B cell (primary cell): ENCODE measurements at regions of chr11 and their contacts with region 1.

Region 1: DNA sequence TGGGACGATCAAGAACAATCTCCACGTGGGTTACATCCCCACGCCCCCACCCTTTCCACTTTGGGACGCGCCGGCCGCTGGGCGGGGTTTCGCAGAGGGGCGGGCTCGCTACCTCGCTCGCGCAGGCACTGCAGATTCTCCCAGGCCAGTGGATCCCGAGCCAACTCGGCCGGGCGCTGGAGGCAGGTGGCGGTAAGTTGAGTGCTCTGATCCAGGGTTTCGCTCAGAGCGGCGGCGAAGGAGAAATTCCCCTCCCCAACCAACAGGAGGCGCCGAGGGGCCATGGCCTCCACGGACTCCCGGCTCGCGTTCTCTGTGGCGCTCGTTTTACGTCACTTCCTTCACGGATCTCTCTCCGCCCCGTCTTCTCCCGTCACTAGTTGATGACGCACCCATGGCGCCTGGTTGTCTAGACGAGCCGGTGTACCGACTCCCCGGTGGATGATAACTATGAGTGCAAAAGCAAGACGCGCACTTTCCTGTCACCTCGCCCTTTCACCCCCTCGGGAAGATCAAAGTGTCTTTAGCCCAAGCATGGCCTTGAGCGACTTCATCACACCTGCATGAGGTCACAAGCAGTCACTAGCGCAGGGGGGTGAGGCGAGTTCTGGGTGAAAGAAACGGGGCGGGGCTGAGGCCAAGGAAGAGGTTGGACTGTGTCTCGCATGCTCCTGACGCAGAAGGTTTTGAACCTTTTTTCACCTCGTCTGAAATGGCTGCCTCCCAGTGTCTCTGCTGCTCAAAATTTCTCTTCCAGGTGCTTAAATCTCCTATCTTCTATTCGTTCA is at the starts of genes CFAP68 and FDXACB1:
- DNase-seq: peak; percentile 99
- ATAC-seq: peak; percentile 90
- H3K4me3 ChIP-seq: peak within 1 kb of the TSS; percentile 58 to 93 (median 75)
- H3K4me3 Mint-ChIP-seq: peak within 1 kb of the TSS; percentile 94
- H3K27ac ChIP-seq: peak within 1 kb of the TSS; percentile 88 to 97
- H3K27ac Mint-ChIP-seq: peak within 1 kb of the TSS; percentile 98
- H3K4me1 ChIP-seq: peaks cover 12 to 14% of the 10 kb centered on the region in 2 donors
- H3K4me1 Mint-ChIP-seq: peaks cover 16% of the 10 kb centered on the region
- H3K27me3 ChIP-seq: no peaks in the 10 kb centered on the region
- H3K27me3 Mint-ChIP-seq: no peaks in the 10 kb centered on the region
- CTCF ChIP-seq: peak; percentile 99
- total RNA-seq, gene CFAP68: 7.8 and 8.2 TPM in 2 replicates
- total RNA-seq, gene FDXACB1: 3.1 and 4.2 TPM in 2 replicates

Region 2: DNA sequence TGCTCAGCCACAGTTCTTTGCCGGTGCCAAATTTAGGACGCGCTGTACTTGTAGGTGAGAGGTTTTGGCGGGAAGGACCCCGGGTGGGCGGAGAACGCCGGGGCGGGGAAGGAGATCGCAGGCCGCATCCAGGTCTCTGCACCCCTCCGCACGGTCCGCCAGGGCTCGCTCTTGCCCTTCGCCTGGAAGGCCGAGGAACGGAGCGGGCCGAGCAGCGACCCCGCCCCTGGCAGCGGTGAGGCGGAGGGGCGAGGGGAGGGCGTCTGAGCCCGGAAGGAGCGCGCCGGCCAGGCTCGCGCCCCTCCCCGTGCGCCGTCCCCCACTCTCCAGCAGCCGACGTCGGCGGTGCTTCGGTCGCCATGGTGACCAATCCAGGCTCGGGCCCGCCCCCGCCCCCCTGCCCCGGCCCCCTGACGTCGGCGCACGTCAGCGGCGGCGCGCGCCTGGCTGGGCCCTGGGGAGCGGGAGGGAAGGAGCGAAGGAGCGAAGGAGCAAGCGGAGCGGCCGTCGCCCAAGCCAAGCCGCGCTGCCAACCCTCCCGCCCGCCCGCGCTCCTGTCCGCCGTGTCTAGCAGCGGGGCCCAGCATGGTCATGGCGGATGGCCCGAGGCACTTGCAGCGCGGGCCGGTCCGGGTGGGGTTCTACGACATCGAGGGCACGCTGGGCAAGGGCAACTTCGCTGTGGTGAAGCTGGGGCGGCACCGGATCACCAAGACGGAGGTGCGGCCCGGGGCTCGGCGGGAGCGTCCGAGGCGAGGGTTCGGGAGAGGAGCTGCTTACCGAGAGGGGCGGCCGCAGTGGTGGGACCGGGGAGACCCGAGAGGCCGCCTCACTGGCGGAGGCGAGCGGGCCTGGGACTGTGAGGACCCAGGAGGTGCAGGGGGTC is 276.8 kb before region 1 on chr11 and contains the start of gene SIK2:
- CTCF ChIA-PET with region 1: interaction called, 3 read pairs
- POLR2A ChIA-PET with region 1: no interaction called
- intact Hi-C with region 1: loop called (anchors 2 kb)
- DNase-seq: peak; percentile 96
- ATAC-seq: peak; percentile 93
- H3K4me3 ChIP-seq: peak within 1 kb of the TSS; percentile 75 to 96 (median 88)
- H3K4me3 Mint-ChIP-seq: peak within 1 kb of the TSS; percentile 98
- H3K27ac ChIP-seq: peak within 1 kb of the TSS; percentile 84 to 92
- H3K27ac Mint-ChIP-seq: peak within 1 kb of the TSS; percentile 94
- H3K4me1 ChIP-seq: peaks cover 14 to 21% of the 10 kb centered on the region in 2 donors
- H3K4me1 Mint-ChIP-seq: peaks cover 18% of the 10 kb centered on the region
- H3K27me3 ChIP-seq: no peaks in the 10 kb centered on the region
- H3K27me3 Mint-ChIP-seq: no peaks in the 10 kb centered on the region
- CTCF ChIP-seq: peak; percentile 77
- total RNA-seq, gene SIK2: 20.4 and 21.8 TPM in 2 replicates

Region 3: DNA sequence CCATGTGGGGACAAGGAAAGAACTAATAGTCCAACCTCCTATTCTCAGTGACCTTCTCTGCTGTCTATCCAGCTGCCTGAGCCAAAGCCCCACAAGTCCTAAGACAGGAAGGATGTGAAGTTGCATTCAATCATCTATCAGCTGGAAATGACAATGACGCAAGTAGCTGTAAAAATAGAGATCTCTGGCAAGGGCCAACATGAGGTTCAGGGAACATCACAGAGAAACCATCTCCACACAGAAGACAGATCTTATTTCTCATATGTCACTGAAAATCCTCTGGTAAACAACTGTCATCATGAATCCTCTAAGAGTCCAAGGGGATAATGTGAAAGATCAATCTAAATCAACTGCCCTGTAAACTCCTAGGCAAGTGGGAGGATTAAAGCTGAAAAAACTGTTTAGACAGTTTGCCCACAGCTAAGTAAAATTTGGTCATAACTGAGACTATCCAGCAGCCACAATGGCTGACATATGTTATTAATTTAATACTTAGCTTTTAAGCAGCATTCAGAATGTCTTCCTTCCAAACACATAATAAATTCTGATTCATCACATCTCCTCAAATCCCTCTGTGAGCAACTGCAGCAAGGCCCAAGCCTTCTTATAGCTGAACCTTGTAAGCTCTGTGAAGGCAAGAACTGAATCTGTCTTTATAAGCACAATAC is 59.7 kb before region 1 on chr11:
- CTCF ChIA-PET with region 1: no interaction called
- POLR2A ChIA-PET with region 1: no interaction called
- intact Hi-C with region 1: no loop called
- DNase-seq: no peak
- ATAC-seq: no peak
- H3K4me3 ChIP-seq: no peak overlapping the region
- H3K4me3 Mint-ChIP-seq: no peak overlapping the region
- H3K27ac ChIP-seq: no peak overlapping the region
- H3K27ac Mint-ChIP-seq: no peak overlapping the region
- H3K4me1 ChIP-seq: no peaks in the 10 kb centered on the region
- H3K4me1 Mint-ChIP-seq: no peaks in the 10 kb centered on the region
- H3K27me3 ChIP-seq: no peaks in the 10 kb centered on the region
- H3K27me3 Mint-ChIP-seq: no peaks in the 10 kb centered on the region
- CTCF ChIP-seq: no peak

Region 4: GRCh38 chr11:111841370-111842053 is 37.5 kb before region 1 on chr11:
- CTCF ChIA-PET with region 1: interaction called, 5 read pairs
- POLR2A ChIA-PET with region 1: interaction called, 12 read pairs
- intact Hi-C with region 1: no loop called
- DNase-seq: peak; percentile 86
- ATAC-seq: peak; percentile 86
- H3K4me3 ChIP-seq: no peak overlapping the region
- H3K4me3 Mint-ChIP-seq: no peak overlapping the region
- H3K27ac ChIP-seq: no peak overlapping the region
- H3K27ac Mint-ChIP-seq: no peak overlapping the region
- H3K4me1 ChIP-seq: peaks cover 3% of the 10 kb centered on the region in 2 donors
- H3K4me1 Mint-ChIP-seq: peaks cover 6% of the 10 kb centered on the region
- H3K27me3 ChIP-seq: no peaks in the 10 kb centered on the region
- H3K27me3 Mint-ChIP-seq: no peaks in the 10 kb centered on the region
- CTCF ChIP-seq: peak; percentile 92

Region 5: GRCh38 chr11:111982019-111982464 is 103.0 kb after region 1 on chr11:
- CTCF ChIA-PET with region 1: interaction called, 4 read pairs
- POLR2A ChIA-PET with region 1: no interaction called
- intact Hi-C with region 1: loop called (anchors 1 kb)
- DNase-seq: peak; percentile 47
- ATAC-seq: peak; percentile 47
- H3K4me3 ChIP-seq: no peak overlapping the region
- H3K4me3 Mint-ChIP-seq: no peak overlapping the region
- H3K27ac ChIP-seq: no peak overlapping the region
- H3K27ac Mint-ChIP-seq: no peak overlapping the region
- H3K4me1 ChIP-seq: peaks cover 8 to 9% of the 10 kb centered on the region in 2 donors
- H3K4me1 Mint-ChIP-seq: peaks cover 7% of the 10 kb centered on the region
- H3K27me3 ChIP-seq: peaks cover 0 to 33% (median 26%) of the 10 kb centered on the region in 4 experiments
- H3K27me3 Mint-ChIP-seq: peaks cover 35% of the 10 kb centered on the region
- CTCF ChIP-seq: peak; percentile 61

Region 6: DNA sequence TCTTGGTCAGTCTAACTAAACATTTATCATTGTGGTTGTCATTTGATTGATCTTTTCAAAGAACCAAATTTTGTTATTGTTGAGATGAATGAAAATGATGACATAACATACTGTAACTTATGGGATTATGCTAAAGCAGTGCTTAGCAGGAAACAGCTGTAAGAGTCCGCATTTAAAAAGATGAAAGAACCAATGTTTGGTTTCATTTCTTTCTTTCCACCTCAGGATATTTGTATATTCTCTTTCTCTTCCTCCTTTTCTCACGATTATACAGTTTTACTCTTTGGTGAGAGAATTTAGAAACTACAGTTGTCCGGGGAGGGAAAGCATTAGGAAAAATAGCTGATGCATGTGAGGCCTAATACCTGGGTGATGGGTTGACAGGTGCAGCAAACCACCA is 171.7 kb after region 1 on chr11:
- CTCF ChIA-PET with region 1: no interaction called
- POLR2A ChIA-PET with region 1: interaction called, 10 read pairs
- intact Hi-C with region 1: no loop called
- DNase-seq: peak; percentile 49
- ATAC-seq: peak; percentile 51
- H3K4me3 ChIP-seq: peak overlapping the region in 1 of 5 experiments; percentile 16
- H3K4me3 Mint-ChIP-seq: peak overlapping the region; percentile 42
- H3K27ac ChIP-seq: peak overlapping the region; percentile 0 to 75
- H3K27ac Mint-ChIP-seq: peak overlapping the region; percentile 75
- H3K4me1 ChIP-seq: peaks cover 39 to 40% of the 10 kb centered on the region in 2 donors
- H3K4me1 Mint-ChIP-seq: peaks cover 48% of the 10 kb centered on the region
- H3K27me3 ChIP-seq: no peaks in the 10 kb centered on the region
- H3K27me3 Mint-ChIP-seq: no peaks in the 10 kb centered on the region
- CTCF ChIP-seq: no peak

Region 7: DNA sequence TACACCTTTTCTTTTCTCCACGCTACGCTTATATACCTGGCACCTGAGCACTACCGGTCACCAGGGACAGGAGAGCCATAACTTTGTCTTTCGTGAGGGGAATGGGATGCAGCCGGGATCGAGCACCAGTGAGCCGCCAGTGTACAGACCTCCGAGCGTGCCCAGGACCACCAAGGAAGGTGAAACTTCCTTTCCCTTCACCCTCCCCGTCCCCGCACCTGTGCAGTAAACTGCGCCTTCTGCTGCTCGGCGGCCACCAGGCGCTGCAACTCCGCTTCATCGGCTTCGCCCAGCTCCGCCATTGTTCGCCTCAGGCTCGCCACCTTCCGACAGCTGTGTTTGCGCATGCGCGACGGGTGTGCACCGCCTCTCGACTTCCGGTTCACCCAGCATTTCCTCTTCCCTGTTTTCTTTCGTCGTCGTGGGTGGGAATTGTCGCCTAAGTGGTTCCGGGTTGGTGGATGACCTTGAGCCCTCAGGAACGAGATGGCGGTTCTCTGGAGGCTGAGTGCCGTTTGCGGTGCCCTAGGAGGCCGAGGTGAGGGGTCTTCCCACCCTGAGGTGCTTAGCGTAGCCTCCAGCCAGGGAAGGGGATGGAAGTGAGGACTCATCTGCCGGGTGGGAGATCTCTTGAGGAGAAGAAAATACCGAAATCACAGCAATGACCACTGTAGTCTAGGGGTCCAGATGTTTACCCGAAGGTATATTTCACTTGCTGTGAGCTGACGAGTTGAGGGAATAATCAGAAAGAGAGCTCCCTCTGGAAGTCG is 207.6 kb after region 1 on chr11 and contains the starts of genes SDHD and TIMM8B:
- CTCF ChIA-PET with region 1: no interaction called
- POLR2A ChIA-PET with region 1: no interaction called
- intact Hi-C with region 1: loop called (anchors 1 kb)
- DNase-seq: peak; percentile 98
- ATAC-seq: peak; percentile 89
- H3K4me3 ChIP-seq: peak within 1 kb of the TSS; percentile 73 to 100 (median 97)
- H3K4me3 Mint-ChIP-seq: peak within 1 kb of the TSS; percentile 89
- H3K27ac ChIP-seq: peak within 1 kb of the TSS; percentile 77 to 91
- H3K27ac Mint-ChIP-seq: peak within 1 kb of the TSS; percentile 93
- H3K4me1 ChIP-seq: peaks cover 18 to 21% of the 10 kb centered on the region in 2 donors
- H3K4me1 Mint-ChIP-seq: peaks cover 42% of the 10 kb centered on the region
- H3K27me3 ChIP-seq: no peaks in the 10 kb centered on the region
- H3K27me3 Mint-ChIP-seq: no peaks in the 10 kb centered on the region
- CTCF ChIP-seq: peak; percentile 26
- total RNA-seq, gene SDHD: 55.0 and 57.7 TPM in 2 replicates
- total RNA-seq, gene TIMM8B: 22.4 and 25.5 TPM in 2 replicates

Region 8: DNA sequence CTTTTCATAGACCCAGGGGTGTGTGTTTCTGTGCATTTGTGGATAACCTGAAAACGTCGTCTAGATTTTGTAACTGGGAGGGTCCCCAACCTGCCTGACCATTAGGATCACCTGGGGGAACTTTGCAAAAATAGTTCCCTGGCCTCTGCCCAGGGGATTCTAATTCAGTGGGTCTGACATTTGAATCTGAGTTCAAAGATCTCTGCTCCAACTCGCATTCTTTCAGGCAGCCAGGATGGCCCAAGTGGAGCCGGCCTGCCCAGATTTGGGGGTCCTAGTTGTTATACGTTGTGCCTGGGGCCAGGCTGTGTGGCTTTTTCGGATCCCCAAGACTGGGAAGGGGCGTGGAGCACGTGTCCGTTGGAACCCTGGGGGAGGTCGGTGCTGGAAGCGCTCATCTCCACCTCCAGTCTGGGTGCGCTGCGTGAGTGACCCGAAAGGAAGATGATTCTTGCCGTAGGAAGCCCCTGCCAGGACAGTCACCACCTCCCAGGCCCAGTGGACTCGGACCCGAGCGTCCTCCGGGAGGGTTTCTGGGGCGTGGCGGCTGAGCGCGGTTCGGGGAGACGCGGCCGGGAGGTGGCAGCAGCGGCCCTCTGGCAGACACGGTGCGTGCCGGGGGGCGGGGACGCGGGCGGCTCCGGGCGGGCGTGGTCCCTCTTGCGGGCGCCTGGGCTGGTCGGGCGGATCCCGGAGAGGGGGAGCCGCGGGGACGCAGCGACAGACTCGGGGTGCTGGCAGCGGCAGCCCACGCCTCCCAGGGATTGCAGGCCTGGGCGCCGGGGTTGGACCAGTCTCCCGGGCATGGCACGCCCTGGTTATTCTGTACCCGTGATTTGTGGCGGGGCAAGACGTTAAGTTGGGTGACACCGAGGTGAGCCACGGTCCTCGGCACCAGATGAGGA is 410.8 kb after region 1 on chr11:
- CTCF ChIA-PET with region 1: no interaction called
- POLR2A ChIA-PET with region 1: no interaction called
- intact Hi-C with region 1: loop called (anchors 5 kb)
- DNase-seq: peak; percentile 88
- ATAC-seq: peak; percentile 98
- H3K4me3 ChIP-seq: peak overlapping the region in 4 of 5 experiments; percentile 40 to 62 (median 53)
- H3K4me3 Mint-ChIP-seq: peak overlapping the region; percentile 87
- H3K27ac ChIP-seq: peak overlapping the region in 1 of 2 donors; percentile 39
- H3K27ac Mint-ChIP-seq: peak overlapping the region; percentile 85
- H3K4me1 ChIP-seq: peaks cover 9 to 13% of the 10 kb centered on the region in 2 donors
- H3K4me1 Mint-ChIP-seq: peaks cover 11% of the 10 kb centered on the region
- H3K27me3 ChIP-seq: peaks cover 0 to 3% (median 0%) of the 10 kb centered on the region in 4 experiments
- H3K27me3 Mint-ChIP-seq: no peaks in the 10 kb centered on the region
- CTCF ChIP-seq: peak; percentile 89